Activated CD4-positive, alpha-beta T cell treated with anti-CD3 and anti-CD28 coated beads, Interleukin-2, amount 10 ng/mL, durations not matched to agents 24 days and 14 days (primary cell): ENCODE measurements at regions of chr16 and their contacts with region 1.

Region 1: GRCh38 chr16:74813109-74813641 is 38.6 kb upstream of the FA2H start:
- DNase-seq: peak; percentile 93
- H3K4me3 Mint-ChIP-seq: peak overlapping the region; percentile 35
- H3K27ac Mint-ChIP-seq: no peak overlapping the region
- H3K4me1 Mint-ChIP-seq: peaks cover 2% of the 10 kb centered on the region
- H3K27me3 Mint-ChIP-seq: peaks cover 3% of the 10 kb centered on the region

Region 2: GRCh38 chr16:74862741-74863244 is 49.6 kb after region 1 on chr16:
- intact Hi-C with region 1: loop called (anchors 5 kb)
- DNase-seq: peak; percentile 62
- H3K4me3 Mint-ChIP-seq: no peak overlapping the region
- H3K27ac Mint-ChIP-seq: no peak overlapping the region
- H3K4me1 Mint-ChIP-seq: peaks cover 6% of the 10 kb centered on the region
- H3K27me3 Mint-ChIP-seq: no peaks in the 10 kb centered on the region